ENCODE measurements at regions of chr6 and their contacts with region 1.

Region 1: GRCh38 chr6:117482240-117483003 is at the start of gene DCBLD1:
- DNase-seq: peak; percentile 78
- H3K4me3 ChIP-seq: peak within 1 kb of the TSS; percentile 53 to 94 (median 92)
- H3K27ac ChIP-seq: peak within 1 kb of the TSS; percentile 92
- H3K4me1 ChIP-seq: peaks cover 28% of the 10 kb centered on the region
- H3K27me3 ChIP-seq: no peaks in the 10 kb centered on the region
- CTCF ChIP-seq: peak in 1 of 2 donors; percentile 12
- POLR2A ChIP-seq: peak; percentile 78
- total RNA-seq, gene DCBLD1: 44.3 and 55.8 TPM in 2 replicates

Region 2: DNA sequence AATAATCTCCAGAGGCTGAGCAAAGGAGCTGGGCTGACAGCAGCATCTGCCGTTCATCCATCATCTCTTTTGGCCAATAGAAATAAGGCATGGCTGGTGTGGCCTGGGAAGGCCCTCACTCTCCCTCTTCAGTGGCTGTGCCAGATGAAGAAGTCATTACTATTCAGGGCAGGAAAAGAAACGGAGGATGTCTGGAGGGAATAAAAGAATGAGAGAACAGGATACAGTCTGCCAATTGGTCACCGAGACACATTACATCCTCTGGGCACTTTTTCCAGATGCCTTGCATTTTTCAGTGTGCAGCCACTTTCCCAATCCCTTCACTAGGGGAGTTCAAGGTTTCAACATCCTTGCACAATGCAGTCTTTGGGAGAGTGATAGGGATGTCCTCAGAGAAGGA is 249.3 kb before region 1 on chr6:
- CTCF ChIA-PET with region 1: no interaction called
- POLR2A ChIA-PET with region 1: no interaction called
- dilution Hi-C with region 1: no loop called
- intact Hi-C with region 1: no loop called
- DNase-seq: no peak
- H3K4me3 ChIP-seq: no peak overlapping the region
- H3K27ac ChIP-seq: no peak overlapping the region
- H3K4me1 ChIP-seq: no peaks in the 10 kb centered on the region
- H3K27me3 ChIP-seq: no peaks in the 10 kb centered on the region
- CTCF ChIP-seq: no peak
- POLR2A ChIP-seq: no peak

Region 3: DNA sequence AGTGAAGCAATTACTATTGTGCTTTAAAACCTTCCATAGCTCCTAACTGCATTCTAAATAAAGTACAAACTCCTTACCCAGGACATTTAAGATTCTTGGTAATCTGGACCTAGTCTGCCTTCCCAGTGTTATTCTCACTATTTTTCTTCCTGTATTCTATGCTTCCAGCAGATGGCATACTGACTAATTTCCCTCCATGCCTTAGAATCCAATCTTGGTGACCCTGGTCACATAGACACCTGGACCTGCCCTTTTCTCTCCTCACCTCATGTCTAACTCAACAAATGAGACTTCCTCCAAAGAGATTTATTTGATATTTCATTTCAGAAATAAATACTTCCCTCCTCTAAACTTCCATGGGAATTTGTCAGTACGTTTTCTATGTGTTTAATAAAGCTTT is 82.5 kb before region 1 on chr6:
- CTCF ChIA-PET with region 1: no interaction called
- POLR2A ChIA-PET with region 1: no interaction called
- dilution Hi-C with region 1: no loop called
- intact Hi-C with region 1: no loop called
- DNase-seq: peak; percentile 13
- H3K4me3 ChIP-seq: no peak overlapping the region
- H3K27ac ChIP-seq: no peak overlapping the region
- H3K4me1 ChIP-seq: no peaks in the 10 kb centered on the region
- H3K27me3 ChIP-seq: peaks cover 0 to 5% of the 10 kb centered on the region in 2 experiments
- CTCF ChIP-seq: no peak
- POLR2A ChIP-seq: no peak

Region 4: DNA sequence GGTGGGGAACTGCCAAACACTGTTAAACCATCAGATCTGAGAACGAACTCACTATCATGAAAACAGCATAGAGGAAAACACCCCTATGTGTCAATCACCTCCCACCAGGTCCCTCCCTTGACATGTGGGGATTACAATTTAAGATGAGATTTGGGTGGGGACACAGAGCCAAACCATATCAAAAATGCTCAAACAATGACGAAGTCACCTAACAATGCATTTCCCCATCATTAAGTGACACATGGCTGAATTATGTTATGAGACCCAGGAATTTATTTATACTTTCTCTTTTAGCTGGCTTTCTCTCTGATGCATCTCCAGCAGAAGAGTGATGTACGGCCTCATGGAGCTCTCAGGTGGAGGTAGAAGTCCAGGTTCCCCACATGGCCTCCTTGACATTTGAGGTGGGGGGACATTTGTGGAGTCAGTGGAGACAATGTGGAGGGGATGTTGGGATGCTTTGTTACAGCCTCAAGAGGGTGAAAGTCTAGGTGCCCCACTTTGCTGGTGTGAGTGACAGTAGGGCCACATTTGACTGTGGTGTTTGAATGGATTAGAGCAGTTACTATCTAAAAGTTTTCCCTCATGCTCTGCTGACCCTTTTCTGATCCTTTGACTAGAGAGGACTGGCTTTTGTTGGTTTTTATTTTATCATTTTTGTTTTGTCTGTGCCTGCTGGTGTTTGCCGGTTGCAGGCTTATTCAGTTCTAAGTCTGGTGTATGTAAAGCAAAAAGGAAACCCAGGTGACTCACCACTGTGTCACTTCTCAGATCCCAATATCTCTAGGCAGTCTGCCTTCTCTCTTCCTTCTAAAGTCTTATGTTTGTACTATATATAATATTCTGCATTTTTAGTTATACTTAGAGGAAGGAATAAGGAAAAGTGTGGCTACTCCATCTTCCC is 18.4 kb before region 1 on chr6:
- CTCF ChIA-PET with region 1: interaction called, 3 read pairs
- POLR2A ChIA-PET with region 1: interaction called, 3 read pairs
- dilution Hi-C with region 1: no loop called
- intact Hi-C with region 1: loop called (anchors 1 kb)
- DNase-seq: peak; percentile 69
- H3K4me3 ChIP-seq: peak overlapping the region in 1 of 3 experiments; percentile 1
- H3K27ac ChIP-seq: peak overlapping the region; percentile 81
- H3K4me1 ChIP-seq: peaks cover 25% of the 10 kb centered on the region
- H3K27me3 ChIP-seq: no peaks in the 10 kb centered on the region
- CTCF ChIP-seq: no peak
- POLR2A ChIP-seq: no peak

Region 5: DNA sequence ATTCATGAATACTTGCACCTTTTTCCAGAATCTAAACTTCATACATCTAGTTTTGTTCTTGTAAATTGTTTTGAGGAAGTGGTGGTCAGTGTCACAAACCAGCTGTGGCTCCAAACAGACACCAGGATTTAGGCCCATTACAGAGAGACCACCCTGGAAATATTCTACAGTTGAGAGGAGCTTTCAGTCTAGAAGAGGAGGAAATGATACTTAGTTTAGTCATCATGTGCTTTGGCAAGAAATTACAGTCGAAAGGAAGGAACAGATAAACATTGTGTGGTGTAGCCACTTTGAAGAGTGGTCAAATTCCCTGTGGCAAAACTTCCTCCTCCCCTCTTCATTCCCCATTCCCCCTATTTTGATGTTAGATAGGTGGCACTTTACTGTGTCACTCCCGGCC is 15.7 kb after region 1 on chr6:
- CTCF ChIA-PET with region 1: interaction called, 15 read pairs
- POLR2A ChIA-PET with region 1: interaction called, 6 read pairs
- dilution Hi-C with region 1: no loop called
- intact Hi-C with region 1: loop called (anchors 1 kb)
- DNase-seq: peak; percentile 88
- H3K4me3 ChIP-seq: no peak overlapping the region
- H3K27ac ChIP-seq: peak overlapping the region; percentile 99
- H3K4me1 ChIP-seq: peaks cover 74% of the 10 kb centered on the region
- H3K27me3 ChIP-seq: no peaks in the 10 kb centered on the region
- CTCF ChIP-seq: no peak
- POLR2A ChIP-seq: peak; percentile 51

Region 6: GRCh38 chr6:117521791-117522502 is 39.5 kb after region 1 on chr6:
- CTCF ChIA-PET with region 1: interaction called, 5 read pairs
- POLR2A ChIA-PET with region 1: no interaction called
- dilution Hi-C with region 1: no loop called
- intact Hi-C with region 1: loop called (anchors 2 kb)
- DNase-seq: peak; percentile 47
- H3K4me3 ChIP-seq: no peak overlapping the region
- H3K27ac ChIP-seq: peak overlapping the region; percentile 32
- H3K4me1 ChIP-seq: peaks cover 22% of the 10 kb centered on the region
- H3K27me3 ChIP-seq: no peaks in the 10 kb centered on the region
- CTCF ChIP-seq: no peak
- POLR2A ChIP-seq: no peak

Region 7: GRCh38 chr6:117555882-117556498 is 73.6 kb after region 1 on chr6:
- CTCF ChIA-PET with region 1: interaction called, 27 read pairs
- POLR2A ChIA-PET with region 1: no interaction called
- dilution Hi-C with region 1: no loop called
- intact Hi-C with region 1: loop called (anchors 1 kb)
- DNase-seq: peak; percentile 68
- H3K4me3 ChIP-seq: no peak overlapping the region
- H3K27ac ChIP-seq: no peak overlapping the region
- H3K4me1 ChIP-seq: peaks cover 25% of the 10 kb centered on the region
- H3K27me3 ChIP-seq: no peaks in the 10 kb centered on the region
- CTCF ChIP-seq: peak; percentile 45 to 59
- POLR2A ChIP-seq: no peak

Measured in endothelial cell of umbilical vein (primary cell).